Endothelial cell of umbilical vein (primary cell): ENCODE measurements at regions of chr17 and their contacts with region 1.

Region 1: DNA sequence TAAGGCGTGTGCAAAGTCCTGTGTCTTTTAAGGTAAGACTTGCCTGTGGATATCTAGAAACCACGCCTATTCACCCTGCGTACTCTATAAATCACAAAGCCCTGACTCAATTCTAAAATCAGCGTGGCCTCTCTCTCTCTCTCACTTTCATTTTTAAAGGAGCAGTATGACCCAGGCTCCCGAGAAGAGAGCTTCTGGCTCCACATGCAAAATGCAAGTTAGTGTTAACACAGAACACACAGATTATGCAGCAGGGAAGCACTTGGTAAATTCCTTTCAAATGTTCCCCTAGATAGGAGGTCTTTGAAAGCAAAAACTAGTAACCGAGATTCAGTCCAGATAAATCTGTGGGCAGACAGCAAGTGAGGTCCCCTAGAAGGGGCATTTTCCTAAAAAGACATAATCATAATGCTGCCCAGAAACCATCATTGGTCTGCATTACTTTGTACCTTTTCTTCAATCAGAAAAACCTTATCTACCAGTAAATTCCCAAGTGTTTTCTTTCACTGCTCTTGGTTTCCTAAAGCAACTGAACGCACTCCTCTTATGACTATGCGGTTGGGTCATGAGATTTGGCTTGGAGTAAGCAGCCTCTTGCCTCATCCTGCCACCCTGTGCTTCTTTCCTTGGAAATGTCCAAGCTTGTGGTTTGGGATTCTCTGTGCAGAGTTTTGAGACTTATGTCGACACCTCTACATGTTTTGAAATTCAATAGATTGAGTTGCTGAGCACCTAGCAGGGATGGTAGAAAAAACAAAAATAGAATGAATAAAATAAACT is 31.7 kb upstream of the KCNJ2 start:
- DNase-seq: peak; percentile 80
- H3K4me3 ChIP-seq: peak overlapping the region in 2 of 3 experiments; percentile 47 to 70
- H3K27ac ChIP-seq: peak overlapping the region; percentile 43
- H3K4me1 ChIP-seq: peaks cover 14% of the 10 kb centered on the region
- H3K27me3 ChIP-seq: no peaks in the 10 kb centered on the region
- CTCF ChIP-seq: no peak
- POLR2A ChIP-seq: no peak

Region 2: DNA sequence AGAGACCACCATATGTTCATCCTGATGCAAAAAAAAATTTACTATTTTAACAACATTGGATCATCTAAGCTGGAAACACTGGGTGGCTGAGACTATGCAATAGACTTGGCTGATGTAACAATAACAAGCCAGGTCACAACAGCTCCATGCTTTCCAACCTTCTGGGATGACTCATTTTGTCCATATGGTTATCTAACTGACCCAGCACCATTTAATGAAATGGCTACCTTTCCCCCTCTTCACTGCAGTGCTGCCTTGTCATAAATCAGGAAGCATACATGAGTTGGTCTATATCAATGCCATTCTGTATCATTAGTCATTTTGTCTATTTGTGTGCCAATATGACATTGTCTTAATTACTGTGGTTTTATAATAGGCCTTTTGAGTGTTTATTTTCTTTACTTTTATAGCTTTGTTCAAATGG is 280.2 kb before region 1 on chr17:
- CTCF ChIA-PET with region 1: no interaction called
- POLR2A ChIA-PET with region 1: no interaction called
- dilution Hi-C with region 1: no loop called
- intact Hi-C with region 1: no loop called
- DNase-seq: peak; percentile 95
- H3K4me3 ChIP-seq: no peak overlapping the region
- H3K27ac ChIP-seq: peak overlapping the region; percentile 35
- H3K4me1 ChIP-seq: peaks cover 14% of the 10 kb centered on the region
- H3K27me3 ChIP-seq: no peaks in the 10 kb centered on the region
- CTCF ChIP-seq: no peak
- POLR2A ChIP-seq: peak; percentile 53

Region 3: GRCh38 chr17:70110443-70110880 is 27.2 kb before region 1 on chr17:
- CTCF ChIA-PET with region 1: no interaction called
- POLR2A ChIA-PET with region 1: no interaction called
- dilution Hi-C with region 1: no loop called
- intact Hi-C with region 1: loop called (anchors 1 kb)
- DNase-seq: peak; percentile 99
- H3K4me3 ChIP-seq: no peak overlapping the region
- H3K27ac ChIP-seq: peak overlapping the region; percentile 82
- H3K4me1 ChIP-seq: peaks cover 27% of the 10 kb centered on the region
- H3K27me3 ChIP-seq: no peaks in the 10 kb centered on the region
- CTCF ChIP-seq: no peak
- POLR2A ChIP-seq: peak; percentile 42

Region 4: GRCh38 chr17:70390049-70390448 is 252.4 kb after region 1 on chr17:
- CTCF ChIA-PET with region 1: no interaction called
- POLR2A ChIA-PET with region 1: no interaction called
- dilution Hi-C with region 1: no loop called
- intact Hi-C with region 1: no loop called
- DNase-seq: no peak
- H3K4me3 ChIP-seq: no peak overlapping the region
- H3K27ac ChIP-seq: no peak overlapping the region
- H3K4me1 ChIP-seq: no peaks in the 10 kb centered on the region
- H3K27me3 ChIP-seq: no peaks in the 10 kb centered on the region
- CTCF ChIP-seq: no peak
- POLR2A ChIP-seq: no peak